ENCODE measurements at regions of chr11 and their contacts with region 1.

Region 1: DNA sequence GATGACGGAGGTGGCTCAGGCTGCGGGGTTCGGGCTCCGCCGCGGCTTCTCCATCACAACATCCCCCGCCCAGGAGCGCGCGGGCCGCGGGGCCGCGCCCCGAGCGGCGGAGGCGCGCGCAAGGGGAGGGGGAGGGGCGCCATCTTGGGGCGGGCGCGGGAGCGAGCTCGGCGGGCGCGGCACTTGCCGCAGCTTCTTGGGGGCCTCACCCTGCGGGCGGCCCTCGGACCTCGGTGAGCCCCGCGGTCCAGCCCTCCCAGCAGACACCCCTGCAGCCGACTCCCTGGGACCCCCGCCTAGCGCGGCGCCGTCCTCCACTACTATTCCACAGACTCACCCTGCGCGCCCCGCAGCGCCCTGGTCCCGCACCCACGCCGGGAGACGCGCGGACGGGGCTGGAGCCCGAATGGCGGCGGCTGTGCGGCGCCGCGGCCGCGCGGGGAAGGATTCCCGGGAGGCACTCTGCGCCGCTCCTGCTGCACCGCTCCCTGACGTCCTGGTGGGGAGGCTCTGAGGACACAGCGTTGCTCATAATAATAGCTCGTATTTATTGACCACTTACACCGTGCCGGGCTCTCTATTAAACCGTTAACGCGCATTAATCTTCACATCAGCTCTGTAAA is at the start of gene APBB1:
- DNase-seq: peak; percentile 76
- CTCF ChIP-seq: no peak

Region 2: GRCh38 chr11:6431861-6432260 is 12.7 kb after region 1 on chr11:
- CTCF ChIA-PET with region 1: interaction called, 10 read pairs
- POLR2A ChIA-PET with region 1: no interaction called
- DNase-seq: no peak
- CTCF ChIP-seq: no peak

Measured in GM10248 (cell line).